ENCODE measurements at regions of chr11 and their contacts with region 1.

Region 1: DNA sequence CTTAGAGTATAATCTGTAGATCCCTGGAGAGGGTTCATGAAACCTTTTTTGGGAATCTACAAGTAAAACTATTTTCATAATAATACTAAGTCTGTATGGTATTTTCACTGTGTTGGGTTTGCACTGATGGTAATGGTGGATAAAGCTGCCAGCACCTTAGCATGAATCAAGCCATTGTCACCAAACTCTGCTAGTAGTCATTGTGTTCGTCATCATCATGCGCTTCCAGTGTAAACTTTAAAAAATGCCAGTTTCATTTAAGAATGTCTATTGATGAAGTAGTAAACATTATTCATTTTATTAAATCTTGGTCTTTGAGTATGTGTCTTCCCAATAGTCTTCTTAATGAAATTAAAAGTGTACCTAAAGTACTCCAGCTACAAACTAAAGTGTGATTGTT is 15.0 kb downstream of the ALKBH3 start:
- DNase-seq: no peak
- H3K4me3 ChIP-seq: no peak overlapping the region
- H3K27ac ChIP-seq: no peak overlapping the region
- H3K4me1 ChIP-seq: no peaks in the 10 kb centered on the region
- H3K27me3 ChIP-seq: no peaks in the 10 kb centered on the region
- CTCF ChIP-seq: no peak

Region 2: GRCh38 chr11:43944761-43945311 is 49.2 kb after region 1 on chr11:
- CTCF ChIA-PET with region 1: no interaction called
- POLR2A ChIA-PET with region 1: no interaction called
- intact Hi-C with region 1: loop called (anchors 5 kb)
- DNase-seq: peak; percentile 73
- H3K4me3 ChIP-seq: no peak overlapping the region
- H3K27ac ChIP-seq: no peak overlapping the region
- H3K4me1 ChIP-seq: peaks cover 21% of the 10 kb centered on the region
- H3K27me3 ChIP-seq: peaks cover 67% of the 10 kb centered on the region
- CTCF ChIP-seq: peak; percentile 100

Region 3: GRCh38 chr11:44036811-44037657 is 141.4 kb after region 1 on chr11:
- CTCF ChIA-PET with region 1: no interaction called
- POLR2A ChIA-PET with region 1: no interaction called
- intact Hi-C with region 1: loop called (anchors 1 kb)
- DNase-seq: peak; percentile 94
- H3K4me3 ChIP-seq: no peak overlapping the region
- H3K27ac ChIP-seq: no peak overlapping the region
- H3K4me1 ChIP-seq: no peaks in the 10 kb centered on the region
- H3K27me3 ChIP-seq: no peaks in the 10 kb centered on the region
- CTCF ChIP-seq: peak; percentile 100

Region 4: GRCh38 chr11:44095506-44096394 is 200.1 kb after region 1 on chr11 and contains the start of gene EXT2:
- CTCF ChIA-PET with region 1: no interaction called
- POLR2A ChIA-PET with region 1: no interaction called
- intact Hi-C with region 1: loop called (anchors 1 kb)
- DNase-seq: peak; percentile 95
- H3K4me3 ChIP-seq: peak within 1 kb of the TSS; percentile 66
- H3K27ac ChIP-seq: peak within 1 kb of the TSS; percentile 72
- H3K4me1 ChIP-seq: peaks cover 16% of the 10 kb centered on the region
- H3K27me3 ChIP-seq: no peaks in the 10 kb centered on the region
- CTCF ChIP-seq: peak; percentile 100
- total RNA-seq, gene EXT2: 123 and 128 TPM in 2 replicates